T-cell (primary cell): ENCODE measurements at regions of chr16 and their contacts with region 1.

Region 1: GRCh38 chr16:48318630-48319029 is 66.6 kb downstream of the SIAH1 start:
- DNase-seq: peak; percentile 2 to 69 (median 30)
- ATAC-seq: peak; percentile 95 to 98 (median 97)
- H3K4me3 ChIP-seq: peak overlapping the region in 1 of 2 donors; percentile 50
- H3K4me3 Mint-ChIP-seq: peak overlapping the region; percentile 53 to 72 (median 57)
- H3K27ac ChIP-seq: peak overlapping the region; percentile 30
- H3K27ac Mint-ChIP-seq: peak overlapping the region; percentile 86 to 89
- H3K4me1 ChIP-seq: peaks cover 28 to 33% of the 10 kb centered on the region in 2 experiments
- H3K4me1 Mint-ChIP-seq: peaks cover 46 to 50% (median 50%) of the 10 kb centered on the region in 3 donors
- H3K27me3 ChIP-seq: no peaks in the 10 kb centered on the region
- H3K27me3 Mint-ChIP-seq: no peaks in the 10 kb centered on the region

Region 2: GRCh38 chr16:47448830-47449575 is 869.6 kb before region 1 on chr16:
- CTCF ChIA-PET with region 1: interaction called in 1 of 2 experiments, 12 read pairs
- POLR2A ChIA-PET with region 1: no interaction called
- DNase-seq: no peak
- ATAC-seq: no peak
- H3K4me3 ChIP-seq: no peak overlapping the region
- H3K4me3 Mint-ChIP-seq: no peak overlapping the region
- H3K27ac ChIP-seq: no peak overlapping the region
- H3K27ac Mint-ChIP-seq: no peak overlapping the region
- H3K4me1 ChIP-seq: no peaks in the 10 kb centered on the region
- H3K4me1 Mint-ChIP-seq: peaks cover 14 to 36% (median 31%) of the 10 kb centered on the region in 3 donors
- H3K27me3 ChIP-seq: no peaks in the 10 kb centered on the region
- H3K27me3 Mint-ChIP-seq: no peaks in the 10 kb centered on the region

Region 3: GRCh38 chr16:48850097-48850770 is 531.6 kb after region 1 on chr16:
- CTCF ChIA-PET with region 1: interaction called in 1 of 2 experiments, 13 read pairs
- POLR2A ChIA-PET with region 1: no interaction called
- DNase-seq: no peak
- ATAC-seq: no peak
- H3K4me3 ChIP-seq: no peak overlapping the region
- H3K4me3 Mint-ChIP-seq: no peak overlapping the region
- H3K27ac ChIP-seq: no peak overlapping the region
- H3K27ac Mint-ChIP-seq: no peak overlapping the region
- H3K4me1 ChIP-seq: no peaks in the 10 kb centered on the region
- H3K4me1 Mint-ChIP-seq: no peaks in the 10 kb centered on the region
- H3K27me3 ChIP-seq: peaks cover 0 to 2% of the 10 kb centered on the region in 2 experiments
- H3K27me3 Mint-ChIP-seq: peaks cover 0 to under 1% of the 10 kb centered on the region in 2 donors